Aorta (tissue), 5 donors: ENCODE measurements at regions of chr21 and their contacts with region 1.

Region 1: GRCh38 chr21:45147473-45148315 is 73.3 kb downstream of the ADARB1 start:
- DNase-seq: peak; percentile 36 to 51
- ATAC-seq: no peak
- H3K4me3 ChIP-seq: no peak overlapping the region
- H3K27ac ChIP-seq: no peak overlapping the region
- H3K4me1 ChIP-seq: no peaks in the 10 kb centered on the region
- H3K27me3 ChIP-seq: no peaks in the 10 kb centered on the region

Region 2: DNA sequence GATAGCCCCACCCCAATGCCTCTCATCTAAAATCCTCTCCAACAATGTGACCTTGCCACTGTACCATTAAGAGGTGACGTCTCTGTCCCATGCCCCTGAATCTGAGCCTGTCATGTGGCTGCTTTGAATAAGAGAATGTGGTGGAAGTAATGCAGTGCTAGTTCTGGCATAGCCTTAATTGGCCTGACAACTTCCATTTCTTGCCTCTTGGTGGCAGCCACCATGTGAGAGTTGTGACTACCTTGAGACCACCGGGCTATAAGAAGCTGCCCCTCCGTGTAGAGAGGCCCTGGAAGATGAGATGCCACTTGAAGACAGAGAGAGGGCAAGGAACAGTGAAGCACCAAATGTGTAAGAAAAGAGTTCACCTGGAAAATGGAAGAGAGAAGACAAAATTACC is 44.6 kb after region 1 on chr21:
- intact Hi-C with region 1: no loop called
- DNase-seq: no peak
- ATAC-seq: no peak
- H3K4me3 ChIP-seq: no peak overlapping the region
- H3K27ac ChIP-seq: no peak overlapping the region
- H3K4me1 ChIP-seq: no peaks in the 10 kb centered on the region
- H3K27me3 ChIP-seq: no peaks in the 10 kb centered on the region

Region 3: GRCh38 chr21:45209046-45209445 is 61.4 kb after region 1 on chr21:
- intact Hi-C with region 1: loop called in 1 of 2 experiments (anchors 5 kb)
- DNase-seq: no peak
- ATAC-seq: no peak
- H3K4me3 ChIP-seq: no peak overlapping the region
- H3K27ac ChIP-seq: no peak overlapping the region
- H3K4me1 ChIP-seq: no peaks in the 10 kb centered on the region
- H3K27me3 ChIP-seq: no peaks in the 10 kb centered on the region